Prostate gland (tissue), 2 donors: ENCODE measurements at regions of chr2 and their contacts with region 1.

Region 1: GRCh38 chr2:70919672-70920366 is 15.9 kb upstream of the ATP6V1B1 start:
- DNase-seq: peak; percentile 81
- H3K4me3 ChIP-seq: no peak overlapping the region
- H3K27ac ChIP-seq: no peak overlapping the region
- H3K4me1 ChIP-seq: no peaks in the 10 kb centered on the region
- H3K27me3 ChIP-seq: no peaks in the 10 kb centered on the region
- CTCF ChIP-seq: peak; percentile 45 to 89 (median 86)
- POLR2A ChIP-seq: no peak

Region 2: DNA sequence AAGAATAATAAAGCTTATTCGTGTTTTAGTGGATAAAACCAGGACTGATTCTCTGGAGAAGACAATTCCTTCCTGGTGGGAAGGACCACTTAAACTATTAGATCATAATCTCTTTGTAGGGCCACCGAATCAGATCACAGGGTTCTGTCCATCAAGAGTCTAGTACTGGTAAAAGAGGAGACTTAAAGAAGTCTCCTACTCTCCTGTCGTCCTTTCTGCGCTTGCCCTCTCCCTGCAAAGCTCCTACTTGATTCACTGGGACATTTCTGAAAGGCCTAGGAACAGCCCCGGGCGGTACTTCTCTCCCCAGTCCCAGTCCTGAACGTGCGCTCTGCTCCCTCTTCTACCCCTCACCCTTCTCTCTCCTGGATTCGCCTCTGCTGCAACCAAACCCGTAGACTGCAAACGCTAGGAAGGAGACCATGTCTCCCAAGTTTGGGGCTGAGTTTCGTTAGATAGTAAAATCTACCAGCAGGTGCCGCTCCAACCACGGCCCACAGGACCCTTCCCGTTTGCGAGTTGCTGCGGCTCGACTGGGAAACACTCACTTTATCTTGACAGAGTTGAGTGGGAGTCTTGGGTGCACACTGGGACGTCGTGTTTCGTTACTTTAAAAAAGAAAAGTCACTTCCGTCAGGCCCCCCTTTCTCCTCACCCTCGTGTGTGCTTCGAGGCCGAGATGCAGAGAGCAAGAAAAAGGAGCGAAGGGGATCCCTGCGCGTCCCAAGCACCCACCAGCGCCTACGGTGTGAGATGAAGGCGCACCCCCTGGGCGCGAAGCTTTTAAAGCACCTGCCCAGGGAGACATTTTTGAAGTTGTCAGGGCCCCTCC is 130.3 kb before region 1 on chr2:
- intact Hi-C with region 1: loop called (anchors 10 kb)
- DNase-seq: peak; percentile 48
- H3K4me3 ChIP-seq: peak overlapping the region in 1 of 2 donors; percentile 17
- H3K27ac ChIP-seq: no peak overlapping the region
- H3K4me1 ChIP-seq: no peaks in the 10 kb centered on the region
- H3K27me3 ChIP-seq: peaks cover 10% of the 10 kb centered on the region
- CTCF ChIP-seq: peak in 3 of 4 experiments; percentile 44 to 51 (median 46)
- POLR2A ChIP-seq: no peak

Region 3: DNA sequence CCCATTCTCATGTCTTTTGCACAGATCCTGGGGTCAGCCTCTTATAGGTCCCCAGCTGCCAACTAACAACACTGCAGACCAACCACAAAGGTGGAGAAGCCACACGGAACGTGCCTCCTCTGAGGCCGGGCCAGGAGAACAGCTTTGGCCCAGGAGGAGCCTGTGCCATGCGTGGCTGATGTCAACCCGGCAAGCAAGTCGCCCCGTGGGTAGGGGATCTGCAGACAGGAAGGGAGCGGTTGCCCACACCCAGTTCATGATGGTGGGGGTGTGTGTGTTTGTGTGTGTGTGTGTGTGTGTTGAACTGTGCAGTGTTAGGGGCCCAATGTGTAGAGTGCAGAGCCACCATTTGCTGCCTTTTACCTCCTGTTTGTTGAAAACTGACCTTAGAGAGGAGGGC is 97.0 kb before region 1 on chr2:
- intact Hi-C with region 1: no loop called
- DNase-seq: no peak
- H3K4me3 ChIP-seq: no peak overlapping the region
- H3K27ac ChIP-seq: no peak overlapping the region
- H3K4me1 ChIP-seq: no peaks in the 10 kb centered on the region
- H3K27me3 ChIP-seq: no peaks in the 10 kb centered on the region
- CTCF ChIP-seq: no peak
- POLR2A ChIP-seq: no peak